ENCODE measurements at regions of chr7 and their contacts with region 1.

Region 1: DNA sequence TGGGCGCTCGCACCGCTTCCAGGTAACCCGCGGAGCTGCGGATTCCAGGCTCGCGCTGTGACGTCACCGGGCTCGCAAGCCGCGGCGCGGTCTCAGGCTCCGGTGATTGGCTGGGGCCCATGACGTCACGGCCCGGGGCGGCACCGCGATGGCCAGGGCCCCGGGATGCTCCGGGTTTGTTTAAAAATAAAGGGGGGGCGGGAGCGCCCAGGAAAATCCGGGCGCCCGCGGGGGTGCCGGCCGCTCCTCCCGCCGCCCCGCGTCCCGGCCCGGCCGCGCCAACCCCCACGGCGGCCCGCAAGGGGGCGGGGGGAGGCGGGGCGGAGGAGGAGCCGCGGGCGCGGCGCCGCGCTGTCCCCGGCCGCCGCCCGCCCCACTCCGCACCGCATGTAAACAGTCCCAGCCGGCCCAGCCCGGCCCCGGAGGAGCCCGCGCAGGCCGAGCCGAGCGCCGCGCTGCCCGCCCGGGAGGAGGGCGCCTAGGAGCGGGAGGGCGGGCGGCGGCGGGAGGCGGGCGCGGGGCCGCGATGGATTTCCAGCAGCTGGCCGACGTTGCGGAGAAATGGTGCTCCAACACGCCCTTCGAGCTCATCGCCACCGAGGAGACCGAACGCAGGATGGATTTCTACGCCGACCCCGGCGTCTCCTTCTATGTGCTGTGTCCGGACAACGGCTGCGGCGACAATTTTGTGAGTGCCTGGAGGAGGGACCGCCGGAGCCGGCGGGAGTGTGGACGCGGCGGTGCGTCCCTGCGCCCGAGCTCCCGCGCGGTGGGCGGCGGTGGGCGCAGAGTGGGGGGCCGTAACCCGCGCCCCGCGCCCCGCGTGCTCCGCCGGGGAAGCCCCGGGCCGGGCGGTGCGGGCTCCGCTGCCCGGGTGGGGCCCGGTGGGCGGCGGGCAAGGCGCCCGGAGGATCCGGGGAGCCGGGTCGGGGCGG is at the start of gene MTURN:
- DNase-seq: no peak
- H3K4me3 ChIP-seq: peak within 1 kb of the TSS; percentile 85 to 95
- H3K27ac ChIP-seq: peak within 1 kb of the TSS; percentile 94
- H3K4me1 ChIP-seq: peaks cover 16% of the 10 kb centered on the region
- H3K27me3 ChIP-seq: no peaks in the 10 kb centered on the region
- CTCF ChIP-seq: peak in 1 of 3 experiments; percentile 2
- POLR2A ChIP-seq: peak in 1 of 2 donors; percentile 53
- total RNA-seq, gene MTURN: 44.2 TPM

Region 2: GRCh38 chr7:30026229-30027064 is 108.4 kb before region 1 on chr7 and contains the start of gene FKBP14:
- intact Hi-C with region 1: loop called (anchors 10 kb)
- DNase-seq: peak; percentile 98 to 99
- H3K4me3 ChIP-seq: peak within 1 kb of the TSS; percentile 80 to 86
- H3K27ac ChIP-seq: peak within 1 kb of the TSS; percentile 94
- H3K4me1 ChIP-seq: peaks cover 58% of the 10 kb centered on the region
- H3K27me3 ChIP-seq: no peaks in the 10 kb centered on the region
- CTCF ChIP-seq: no peak
- POLR2A ChIP-seq: no peak
- total RNA-seq, gene FKBP14: 4.4 TPM

Region 3: DNA sequence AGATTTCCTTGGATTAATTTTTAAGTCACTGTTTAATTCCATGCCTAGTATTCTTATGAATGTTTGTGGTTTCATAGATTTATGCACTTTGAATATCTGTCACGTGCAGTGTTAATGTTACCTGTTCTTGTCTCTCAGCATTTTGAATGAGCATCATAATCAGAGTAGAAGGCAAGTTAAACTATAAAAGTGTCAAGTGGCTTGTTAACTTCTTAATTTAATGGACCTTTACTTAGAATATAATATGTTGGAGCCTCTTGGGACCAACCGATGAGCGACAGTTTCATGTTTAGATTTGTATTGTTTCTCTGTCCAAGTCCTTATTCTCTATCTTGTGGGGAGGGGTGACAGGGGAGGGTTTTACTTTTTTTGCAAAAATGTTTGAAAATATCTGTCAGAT is 50.7 kb before region 1 on chr7:
- intact Hi-C with region 1: loop called (anchors 2 kb)
- DNase-seq: no peak
- H3K4me3 ChIP-seq: no peak overlapping the region
- H3K27ac ChIP-seq: no peak overlapping the region
- H3K4me1 ChIP-seq: no peaks in the 10 kb centered on the region
- H3K27me3 ChIP-seq: no peaks in the 10 kb centered on the region
- CTCF ChIP-seq: no peak
- POLR2A ChIP-seq: no peak